CD8-positive, alpha-beta T cell (primary cell): ENCODE measurements at regions of chr19 and their contacts with region 1.

Region 1: GRCh38 chr19:21586311-21587116 is 81.1 kb downstream of the ZNF429 start:
- DNase-seq: peak in 6 of 9 experiments; percentile 23 to 58 (median 38)
- ATAC-seq: peak; percentile 67
- H3K4me3 ChIP-seq: peak overlapping the region; percentile 41 to 54
- H3K4me3 Mint-ChIP-seq: peak overlapping the region; percentile 86
- H3K27ac ChIP-seq: no peak overlapping the region
- H3K27ac Mint-ChIP-seq: peak overlapping the region; percentile 80
- H3K4me1 ChIP-seq: peaks cover 28% of the 10 kb centered on the region
- H3K4me1 Mint-ChIP-seq: peaks cover 45% of the 10 kb centered on the region
- H3K27me3 ChIP-seq: peaks cover 0 to 3% of the 10 kb centered on the region in 2 experiments
- H3K27me3 Mint-ChIP-seq: no peaks in the 10 kb centered on the region
- CTCF ChIP-seq: no peak

Region 2: DNA sequence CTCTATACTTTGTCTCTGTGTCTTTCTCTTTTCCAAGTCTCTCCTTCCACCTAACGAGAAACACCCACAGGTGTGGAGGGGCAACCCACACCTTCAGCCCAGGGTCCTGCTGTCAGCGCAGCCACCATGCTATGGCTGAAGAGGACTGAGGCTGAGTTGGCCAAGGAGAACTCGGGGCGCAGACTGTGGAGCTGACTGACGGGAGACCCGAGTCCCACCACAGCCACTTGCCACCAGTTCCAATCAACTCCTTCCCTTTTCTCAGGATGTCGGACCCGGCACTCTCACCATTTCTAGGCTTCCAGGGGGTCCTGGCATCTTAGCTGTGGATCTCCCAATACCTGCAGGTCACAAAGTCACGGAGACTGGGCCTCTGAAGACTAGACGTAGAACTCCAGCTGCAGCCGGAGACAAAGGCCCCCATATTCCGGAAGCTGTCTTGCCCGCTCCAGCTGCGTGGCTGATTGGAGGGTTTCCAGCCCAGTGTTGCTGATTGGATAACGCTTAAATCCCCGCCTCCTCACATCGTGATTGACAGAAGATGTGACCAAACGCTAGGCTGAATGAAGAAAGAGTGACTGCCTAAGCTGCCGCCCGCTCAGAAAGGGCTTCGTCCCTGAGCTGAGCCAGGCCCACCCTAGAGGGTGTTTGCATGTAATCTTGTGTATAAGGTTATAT is 17.6 kb before region 1 on chr19:
- CTCF ChIA-PET with region 1: interaction called, 3 read pairs
- POLR2A ChIA-PET with region 1: interaction called, 30 read pairs
- intact Hi-C with region 1: loop called in 1 of 2 experiments (anchors 1 kb)
- DNase-seq: peak; percentile 49 to 97 (median 84)
- ATAC-seq: peak; percentile 98
- H3K4me3 ChIP-seq: peak overlapping the region; percentile 57 to 83
- H3K4me3 Mint-ChIP-seq: peak overlapping the region; percentile 97
- H3K27ac ChIP-seq: peak overlapping the region; percentile 72 to 84
- H3K27ac Mint-ChIP-seq: peak overlapping the region; percentile 99
- H3K4me1 ChIP-seq: peaks cover 4% of the 10 kb centered on the region
- H3K4me1 Mint-ChIP-seq: peaks cover 29% of the 10 kb centered on the region
- H3K27me3 ChIP-seq: no peaks in the 10 kb centered on the region
- H3K27me3 Mint-ChIP-seq: no peaks in the 10 kb centered on the region
- CTCF ChIP-seq: no peak

Region 3: DNA sequence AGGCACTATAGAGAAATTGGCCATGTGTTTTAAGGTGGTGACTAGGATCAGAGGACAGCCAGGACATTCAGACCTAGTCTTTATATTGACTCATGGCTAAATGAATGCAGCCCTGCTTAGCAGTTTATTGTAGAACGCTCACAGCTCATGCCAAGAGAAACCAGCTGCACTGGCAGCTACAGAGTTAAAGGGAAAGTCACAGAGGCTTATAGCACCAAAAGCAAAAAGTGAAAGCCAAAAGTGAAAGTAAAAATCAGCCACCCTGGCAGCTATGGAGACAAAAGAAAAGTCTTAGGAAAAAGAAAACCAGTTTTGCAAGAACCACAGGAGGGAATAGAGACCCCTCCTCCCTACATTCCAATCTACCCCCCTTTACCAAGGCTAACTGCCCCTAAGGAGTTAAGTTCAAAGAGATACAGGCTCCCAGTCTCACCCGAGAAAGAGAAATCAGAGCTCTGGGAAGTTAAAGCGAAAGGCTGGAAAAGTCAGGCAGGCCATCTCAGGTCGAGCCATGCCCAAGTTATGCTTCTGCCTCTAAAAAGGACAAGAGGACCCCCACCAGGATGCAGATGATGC is 17.9 kb after region 1 on chr19:
- CTCF ChIA-PET with region 1: no interaction called
- POLR2A ChIA-PET with region 1: interaction called, 7 read pairs
- intact Hi-C with region 1: loop called in 1 of 2 experiments (anchors 2 kb)
- DNase-seq: peak in 1 of 9 experiments; percentile 65
- ATAC-seq: peak; percentile 85
- H3K4me3 ChIP-seq: peak overlapping the region; percentile 53 to 61
- H3K4me3 Mint-ChIP-seq: peak overlapping the region; percentile 95
- H3K27ac ChIP-seq: peak overlapping the region; percentile 58 to 64
- H3K27ac Mint-ChIP-seq: peak overlapping the region; percentile 96
- H3K4me1 ChIP-seq: peaks cover 12% of the 10 kb centered on the region
- H3K4me1 Mint-ChIP-seq: peaks cover 30% of the 10 kb centered on the region
- H3K27me3 ChIP-seq: no peaks in the 10 kb centered on the region
- H3K27me3 Mint-ChIP-seq: no peaks in the 10 kb centered on the region
- CTCF ChIP-seq: no peak

Region 4: GRCh38 chr19:21626924-21627697 is 40.6 kb after region 1 on chr19:
- CTCF ChIA-PET with region 1: no interaction called
- POLR2A ChIA-PET with region 1: no interaction called
- intact Hi-C with region 1: no loop called
- DNase-seq: no peak
- ATAC-seq: no peak
- H3K4me3 ChIP-seq: no peak overlapping the region
- H3K4me3 Mint-ChIP-seq: no peak overlapping the region
- H3K27ac ChIP-seq: no peak overlapping the region
- H3K27ac Mint-ChIP-seq: no peak overlapping the region
- H3K4me1 ChIP-seq: no peaks in the 10 kb centered on the region
- H3K4me1 Mint-ChIP-seq: peaks cover 4% of the 10 kb centered on the region
- H3K27me3 ChIP-seq: no peaks in the 10 kb centered on the region
- H3K27me3 Mint-ChIP-seq: no peaks in the 10 kb centered on the region
- CTCF ChIP-seq: no peak

Region 5: GRCh38 chr19:21677696-21678418 is 91.3 kb after region 1 on chr19:
- CTCF ChIA-PET with region 1: interaction called, 3 read pairs
- POLR2A ChIA-PET with region 1: no interaction called
- intact Hi-C with region 1: loop called in 1 of 2 experiments (anchors 5 kb)
- DNase-seq: peak in 4 of 9 experiments; percentile 1 to 49 (median 18)
- ATAC-seq: peak; percentile 44
- H3K4me3 ChIP-seq: peak overlapping the region in 1 of 2 experiments; percentile 40
- H3K4me3 Mint-ChIP-seq: peak overlapping the region; percentile 59
- H3K27ac ChIP-seq: no peak overlapping the region
- H3K27ac Mint-ChIP-seq: no peak overlapping the region
- H3K4me1 ChIP-seq: no peaks in the 10 kb centered on the region
- H3K4me1 Mint-ChIP-seq: peaks cover 6% of the 10 kb centered on the region
- H3K27me3 ChIP-seq: no peaks in the 10 kb centered on the region
- H3K27me3 Mint-ChIP-seq: peaks cover 3% of the 10 kb centered on the region
- CTCF ChIP-seq: no peak

Region 6: GRCh38 chr19:21835810-21836444 is 249.4 kb after region 1 on chr19 and contains the start of gene ZNF43:
- CTCF ChIA-PET with region 1: no interaction called
- POLR2A ChIA-PET with region 1: no interaction called
- intact Hi-C with region 1: loop called in 1 of 2 experiments (anchors 10 kb)
- DNase-seq: peak; percentile 85 to 96 (median 93)
- ATAC-seq: peak; percentile 97
- H3K4me3 ChIP-seq: peak within 1 kb of the TSS; percentile 84 to 85
- H3K4me3 Mint-ChIP-seq: peak within 1 kb of the TSS; percentile 98
- H3K27ac ChIP-seq: peak within 1 kb of the TSS; percentile 75 to 84
- H3K27ac Mint-ChIP-seq: peak within 1 kb of the TSS; percentile 97
- H3K4me1 ChIP-seq: peaks cover 9% of the 10 kb centered on the region
- H3K4me1 Mint-ChIP-seq: peaks cover 34% of the 10 kb centered on the region
- H3K27me3 ChIP-seq: no peaks in the 10 kb centered on the region
- H3K27me3 Mint-ChIP-seq: no peaks in the 10 kb centered on the region
- CTCF ChIP-seq: no peak
- total RNA-seq, gene ZNF43: 29.9 to 31.8 TPM